Activated T-helper 2 cell treated with anti-CD3 and anti-CD28 coated beads, Interferon-gamma antibody, Interleukin-2, Interleukin-4, amounts not matched to agents 10 μg/mL and 5 μg/mL and 100 μg/mL, durations not matched to agents 14 hours and 24 hours and 36 hours (primary cell): ENCODE measurements at regions of chr12 and their contacts with region 1.

Region 1: GRCh38 chr12:53543539-53543938 is 36.3 kb upstream of the NPFF start:
- DNase-seq: peak; percentile 42
- H3K4me3 Mint-ChIP-seq: no peak overlapping the region
- H3K27ac Mint-ChIP-seq: peak overlapping the region; percentile 75
- H3K4me1 Mint-ChIP-seq: peaks cover 10% of the 10 kb centered on the region
- H3K27me3 Mint-ChIP-seq: no peaks in the 10 kb centered on the region

Region 2: GRCh38 chr12:53575502-53576253 is 32.1 kb after region 1 on chr12:
- intact Hi-C with region 1: loop called (anchors 5 kb)
- DNase-seq: no peak
- H3K4me3 Mint-ChIP-seq: no peak overlapping the region
- H3K27ac Mint-ChIP-seq: peak overlapping the region; percentile 21
- H3K4me1 Mint-ChIP-seq: peaks cover 47% of the 10 kb centered on the region
- H3K27me3 Mint-ChIP-seq: no peaks in the 10 kb centered on the region

Region 3: DNA sequence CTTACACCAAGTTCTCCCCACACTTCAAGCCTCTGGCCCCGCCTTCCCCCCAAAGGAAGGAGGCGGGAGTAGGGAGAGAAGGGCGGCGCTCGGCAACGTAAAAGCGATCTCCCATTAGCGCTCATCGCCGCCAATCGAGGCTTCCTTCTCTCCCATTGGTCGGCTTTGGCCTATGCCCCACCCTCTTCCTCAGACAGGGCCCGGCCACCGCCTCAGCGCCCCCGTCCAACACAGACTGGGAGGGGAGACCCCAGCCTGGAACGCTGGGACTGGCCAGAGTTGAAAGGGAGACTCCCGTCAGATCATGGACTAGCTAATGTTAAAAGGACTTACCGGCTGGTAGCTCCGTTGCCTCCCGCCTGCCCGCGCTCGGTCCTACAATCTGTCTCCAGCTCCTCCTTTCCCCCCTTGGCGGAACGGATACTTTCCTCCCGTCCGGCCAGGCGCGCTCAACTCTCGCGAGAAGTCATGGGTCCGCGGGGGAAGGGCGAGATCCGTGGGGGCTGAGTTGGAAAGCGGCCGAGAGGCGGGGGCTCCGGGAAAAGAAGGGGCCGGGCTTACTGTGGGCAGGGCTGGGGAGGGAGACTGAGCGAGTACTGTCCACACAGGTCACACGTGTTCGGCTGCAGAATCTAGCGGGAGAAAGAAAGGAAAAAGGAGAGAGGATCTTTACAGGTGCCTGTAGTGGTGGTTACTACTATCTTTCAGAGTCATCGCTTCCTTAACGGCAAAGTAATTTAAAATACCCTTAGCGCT is 82.6 kb after region 1 on chr12 and contains the start of gene ATF7:
- intact Hi-C with region 1: loop called (anchors 1 kb)
- DNase-seq: peak; percentile 97
- H3K4me3 Mint-ChIP-seq: peak within 1 kb of the TSS; percentile 100
- H3K27ac Mint-ChIP-seq: peak within 1 kb of the TSS; percentile 79
- H3K4me1 Mint-ChIP-seq: peaks cover 35% of the 10 kb centered on the region
- H3K27me3 Mint-ChIP-seq: peaks cover 2% of the 10 kb centered on the region
- total RNA-seq, gene ATF7: 28.0 and 32.0 TPM in 2 replicates

Region 4: DNA sequence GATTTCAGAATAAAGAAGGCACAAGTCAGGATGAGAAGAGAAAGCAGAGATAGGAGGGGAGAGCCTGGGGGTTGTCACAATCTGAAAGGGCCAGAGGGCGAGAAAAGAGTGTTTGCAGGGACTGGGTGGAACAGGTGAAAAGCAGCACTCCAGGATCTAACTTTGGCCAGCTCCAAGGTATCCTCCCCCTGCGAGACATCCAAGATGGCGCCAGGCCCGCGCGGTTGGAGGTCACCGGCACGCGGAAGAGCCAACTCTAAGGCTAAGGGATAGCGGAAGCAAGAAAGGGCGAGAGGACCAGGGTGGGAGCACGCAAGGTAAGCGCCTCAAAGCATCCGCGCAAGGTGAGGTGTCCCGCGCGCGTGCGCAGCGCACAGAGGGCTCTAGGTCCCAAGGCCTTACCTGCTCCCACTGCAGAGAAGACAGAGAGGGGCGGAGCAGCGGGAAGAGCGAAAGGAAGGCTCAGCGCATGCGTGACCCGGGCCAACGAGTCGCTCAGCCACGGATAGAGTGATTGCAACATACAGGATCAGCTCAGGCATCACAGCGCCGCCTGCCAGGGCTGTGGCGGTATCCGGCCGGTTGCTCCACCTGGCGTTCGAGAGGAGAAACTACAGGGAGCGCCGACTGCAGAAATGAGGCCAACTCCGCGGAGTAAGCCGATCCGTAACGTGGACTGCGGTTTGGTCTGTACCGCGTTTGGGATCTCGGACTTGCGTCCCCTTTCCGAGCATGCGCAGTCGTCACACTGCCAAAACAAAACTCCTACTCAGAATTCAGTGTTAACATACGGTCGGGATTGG is 132.3 kb after region 1 on chr12 and contains the start of gene ATP5MC2:
- intact Hi-C with region 1: loop called (anchors 1 kb)
- DNase-seq: peak; percentile 97
- H3K4me3 Mint-ChIP-seq: peak within 1 kb of the TSS; percentile 93
- H3K27ac Mint-ChIP-seq: peak within 1 kb of the TSS; percentile 92
- H3K4me1 Mint-ChIP-seq: peaks cover 28% of the 10 kb centered on the region
- H3K27me3 Mint-ChIP-seq: peaks cover 29% of the 10 kb centered on the region
- total RNA-seq, gene ATP5MC2: 433 and 438 TPM in 2 replicates

Region 5: DNA sequence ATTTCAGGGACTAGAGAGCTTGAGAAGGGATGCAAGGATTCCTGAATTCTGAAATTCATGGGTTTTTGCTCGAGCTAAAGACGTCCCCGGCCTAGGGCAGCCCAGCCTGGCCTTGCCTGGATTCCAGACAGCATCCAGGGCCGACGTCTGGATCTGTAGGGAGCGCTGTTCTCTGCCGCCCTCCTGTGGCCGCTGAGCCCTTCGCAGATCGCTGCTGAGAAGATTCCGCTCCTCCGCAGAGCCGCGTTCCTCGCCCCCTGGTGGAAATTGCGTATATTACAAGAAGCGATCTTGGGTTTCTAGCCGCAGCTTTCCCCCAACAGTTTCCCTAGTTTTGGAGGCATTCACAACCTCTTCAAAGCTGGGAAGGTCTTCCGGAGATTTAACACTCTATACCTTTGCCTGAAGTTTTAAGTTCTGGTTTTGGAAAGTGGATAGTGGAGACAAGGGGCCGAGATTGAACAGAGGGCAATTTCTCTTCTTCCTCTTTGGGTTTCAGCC is 203.1 kb after region 1 on chr12:
- intact Hi-C with region 1: loop called (anchors 10 kb)
- DNase-seq: peak; percentile 80
- H3K4me3 Mint-ChIP-seq: no peak overlapping the region
- H3K27ac Mint-ChIP-seq: no peak overlapping the region
- H3K4me1 Mint-ChIP-seq: peaks cover 16% of the 10 kb centered on the region
- H3K27me3 Mint-ChIP-seq: peaks cover 36% of the 10 kb centered on the region